Activated CD4-positive, alpha-beta T cell treated with anti-CD3 and anti-CD28 coated beads for 36 hours (primary cell): ENCODE measurements at regions of chr9 and their contacts with region 1.

Region 1: DNA sequence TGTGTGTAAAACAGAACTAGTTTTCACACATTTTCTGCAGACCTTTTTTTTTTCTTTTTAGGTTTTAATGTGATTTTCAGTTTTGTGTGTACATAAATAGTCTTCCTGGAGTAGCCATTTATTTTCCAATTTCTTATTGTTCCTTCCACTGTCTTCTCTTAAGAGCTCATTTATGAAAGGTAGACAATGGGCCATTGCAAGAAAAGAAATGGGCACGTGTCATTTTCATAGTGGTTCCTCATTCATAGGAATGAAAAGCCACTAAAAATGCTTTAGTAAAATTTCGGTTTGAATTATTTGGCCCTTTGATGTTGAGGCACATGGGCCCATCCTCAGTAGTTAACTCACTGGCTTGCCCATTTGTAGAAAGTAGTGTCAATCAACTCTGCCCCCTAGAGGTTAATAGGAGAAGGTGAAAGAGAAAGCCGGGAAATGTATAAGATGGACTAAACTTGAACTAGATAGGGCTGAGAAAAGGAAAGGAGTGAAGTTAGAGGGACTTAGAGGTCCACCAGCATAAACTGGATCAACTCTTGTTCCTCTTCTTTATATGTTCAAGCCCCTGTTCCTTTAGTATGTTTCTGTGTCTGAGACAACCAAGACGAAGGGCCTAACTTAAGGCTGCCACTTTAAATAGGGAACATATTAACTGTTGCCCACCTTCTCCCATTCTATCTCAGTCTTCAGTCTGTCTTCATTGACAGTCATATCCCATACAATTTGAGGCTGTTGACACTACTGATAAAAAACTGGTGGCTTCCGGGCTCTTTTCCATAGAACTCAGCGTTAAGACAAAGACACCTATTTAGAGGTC is 72.6 kb downstream of the SMARCA2 start:
- DNase-seq: peak; percentile 39
- ATAC-seq: peak; percentile 95
- H3K4me3 Mint-ChIP-seq: no peak overlapping the region
- H3K27ac Mint-ChIP-seq: peak overlapping the region; percentile 24
- H3K4me1 Mint-ChIP-seq: peaks cover 18% of the 10 kb centered on the region
- H3K27me3 Mint-ChIP-seq: no peaks in the 10 kb centered on the region

Region 2: GRCh38 chr9:1460143-1460769 is 627.5 kb before region 1 on chr9:
- CTCF ChIA-PET with region 1: no interaction called
- POLR2A ChIA-PET with region 1: no interaction called
- intact Hi-C with region 1: loop called (anchors 10 kb)
- DNase-seq: peak; percentile 30
- ATAC-seq: peak; percentile 42
- H3K4me3 Mint-ChIP-seq: no peak overlapping the region
- H3K27ac Mint-ChIP-seq: no peak overlapping the region
- H3K4me1 Mint-ChIP-seq: peaks cover 4% of the 10 kb centered on the region
- H3K27me3 Mint-ChIP-seq: peaks cover 10% of the 10 kb centered on the region

Region 3: GRCh38 chr9:1775230-1775629 is 312.5 kb before region 1 on chr9:
- CTCF ChIA-PET with region 1: no interaction called
- POLR2A ChIA-PET with region 1: no interaction called
- intact Hi-C with region 1: no loop called
- DNase-seq: no peak
- ATAC-seq: no peak
- H3K4me3 Mint-ChIP-seq: no peak overlapping the region
- H3K27ac Mint-ChIP-seq: no peak overlapping the region
- H3K4me1 Mint-ChIP-seq: no peaks in the 10 kb centered on the region
- H3K27me3 Mint-ChIP-seq: no peaks in the 10 kb centered on the region

Region 4: DNA sequence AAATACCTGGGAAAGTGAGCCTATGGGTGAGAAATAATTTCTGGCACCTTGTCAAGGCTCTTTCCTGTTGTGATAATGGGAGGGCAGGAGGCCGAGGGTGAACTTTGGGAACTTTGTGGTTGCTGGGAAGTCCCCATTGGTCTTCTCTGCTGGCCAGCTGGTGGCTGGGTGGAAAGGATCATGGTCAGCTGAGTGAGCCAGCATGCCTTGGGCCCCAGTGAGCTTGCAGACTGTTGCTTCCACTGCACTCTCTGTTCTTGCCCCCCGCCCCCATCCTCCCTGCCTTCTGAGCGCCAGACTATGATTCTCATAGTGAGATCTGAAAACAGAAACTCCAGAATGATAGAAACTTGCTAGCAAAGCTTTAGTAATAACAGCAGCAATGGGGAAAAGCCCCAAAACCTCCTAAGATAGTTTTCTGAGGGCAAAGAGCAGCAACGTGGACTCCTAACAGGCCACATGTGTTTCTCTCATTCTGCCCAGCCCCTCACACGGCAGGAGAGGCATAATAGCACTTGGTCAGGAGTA is 211.7 kb before region 1 on chr9:
- CTCF ChIA-PET with region 1: interaction called, 3 read pairs
- POLR2A ChIA-PET with region 1: interaction called, 4 read pairs
- intact Hi-C with region 1: loop called in 1 of 2 experiments (anchors 2 kb)
- DNase-seq: peak; percentile 90
- ATAC-seq: peak; percentile 71
- H3K4me3 Mint-ChIP-seq: no peak overlapping the region
- H3K27ac Mint-ChIP-seq: peak overlapping the region; percentile 66
- H3K4me1 Mint-ChIP-seq: peaks cover 40% of the 10 kb centered on the region
- H3K27me3 Mint-ChIP-seq: peaks cover 22% of the 10 kb centered on the region

Region 5: DNA sequence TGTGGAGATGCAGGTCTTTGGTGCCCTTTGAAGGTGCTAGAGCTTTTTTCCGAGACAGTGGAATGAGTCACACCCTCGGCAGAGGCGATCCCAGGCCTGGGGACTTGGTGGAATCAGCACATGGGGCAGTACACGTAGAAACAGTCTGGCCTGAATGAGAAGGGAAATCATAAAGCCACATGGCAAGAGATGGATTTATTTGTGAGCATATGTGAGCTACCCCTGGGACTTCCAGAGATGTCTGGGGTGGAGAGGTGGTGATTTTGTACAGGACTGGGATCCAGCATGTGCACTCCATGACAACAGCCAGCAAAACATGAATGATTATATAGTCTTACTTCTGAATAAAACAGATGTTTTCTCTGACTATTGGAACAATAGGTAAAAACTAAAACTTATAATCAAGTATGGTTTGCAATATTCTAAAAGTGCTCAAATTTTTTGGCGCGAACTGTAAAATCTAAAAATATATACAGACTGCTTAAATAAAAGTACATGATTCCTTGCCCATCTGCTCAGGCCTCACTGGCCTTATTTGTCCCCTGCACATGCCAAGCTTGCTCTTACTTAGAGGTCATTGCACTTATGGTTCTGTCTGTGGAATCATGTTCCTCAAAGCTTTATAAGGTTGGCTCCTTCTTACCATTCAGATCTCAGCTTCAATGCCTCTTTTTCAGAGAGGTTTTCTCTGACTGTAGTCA is 127.2 kb before region 1 on chr9:
- CTCF ChIA-PET with region 1: no interaction called
- POLR2A ChIA-PET with region 1: no interaction called
- intact Hi-C with region 1: no loop called
- DNase-seq: no peak
- ATAC-seq: no peak
- H3K4me3 Mint-ChIP-seq: no peak overlapping the region
- H3K27ac Mint-ChIP-seq: no peak overlapping the region
- H3K4me1 Mint-ChIP-seq: no peaks in the 10 kb centered on the region
- H3K27me3 Mint-ChIP-seq: no peaks in the 10 kb centered on the region

Region 6: GRCh38 chr9:2014696-2015580 is 72.8 kb before region 1 on chr9 and contains the start of gene SMARCA2:
- CTCF ChIA-PET with region 1: interaction called, 3 read pairs
- POLR2A ChIA-PET with region 1: no interaction called
- intact Hi-C with region 1: loop called in 1 of 2 experiments (anchors 1 kb)
- DNase-seq: peak; percentile 98
- ATAC-seq: peak; percentile 84
- H3K4me3 Mint-ChIP-seq: peak within 1 kb of the TSS; percentile 92
- H3K27ac Mint-ChIP-seq: peak within 1 kb of the TSS; percentile 99
- H3K4me1 Mint-ChIP-seq: peaks cover 45% of the 10 kb centered on the region
- H3K27me3 Mint-ChIP-seq: no peaks in the 10 kb centered on the region
- total RNA-seq, gene SMARCA2: 91.3 to 94.0 TPM

Region 7: DNA sequence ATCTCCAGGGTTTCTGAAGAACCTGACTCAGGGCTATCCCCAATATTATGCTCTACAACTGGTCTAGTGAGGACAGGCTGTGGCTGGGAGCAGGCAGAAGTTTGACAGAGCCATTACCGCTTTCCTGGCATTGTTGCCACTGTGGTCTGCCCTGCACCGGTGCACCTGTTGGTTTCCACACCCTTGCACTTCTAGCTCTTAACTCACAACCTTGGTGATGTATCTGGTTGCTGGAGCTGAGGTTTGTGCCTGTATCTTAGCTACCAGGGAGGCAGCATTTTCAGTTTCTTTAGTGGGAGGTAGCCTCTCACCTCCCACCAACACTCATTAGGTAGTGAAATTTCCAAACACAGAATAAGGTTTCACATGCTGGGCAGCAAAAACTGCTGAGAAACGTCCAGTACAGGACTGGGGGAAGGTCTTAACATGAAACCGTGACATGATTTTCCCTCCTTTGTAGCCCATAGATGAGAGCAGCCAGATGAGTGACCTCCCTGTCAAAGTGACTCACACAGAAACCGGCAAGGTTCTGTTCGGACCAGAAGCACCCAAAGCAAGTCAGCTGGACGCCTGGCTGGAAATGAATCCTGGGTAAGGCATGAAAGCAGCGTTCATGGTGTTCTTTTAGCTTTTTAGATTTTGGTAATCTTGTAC is 14.8 kb before region 1 on chr9:
- CTCF ChIA-PET with region 1: interaction called, 10 read pairs
- POLR2A ChIA-PET with region 1: no interaction called
- intact Hi-C with region 1: no loop called
- DNase-seq: peak; percentile 17
- ATAC-seq: peak; percentile 65
- H3K4me3 Mint-ChIP-seq: no peak overlapping the region
- H3K27ac Mint-ChIP-seq: no peak overlapping the region
- H3K4me1 Mint-ChIP-seq: peaks cover 18% of the 10 kb centered on the region
- H3K27me3 Mint-ChIP-seq: no peaks in the 10 kb centered on the region

Region 8: GRCh38 chr9:2199999-2200796 is 112.5 kb after region 1 on chr9:
- CTCF ChIA-PET with region 1: no interaction called
- POLR2A ChIA-PET with region 1: no interaction called
- intact Hi-C with region 1: no loop called
- DNase-seq: no peak
- ATAC-seq: no peak
- H3K4me3 Mint-ChIP-seq: no peak overlapping the region
- H3K27ac Mint-ChIP-seq: no peak overlapping the region
- H3K4me1 Mint-ChIP-seq: peaks cover 9% of the 10 kb centered on the region
- H3K27me3 Mint-ChIP-seq: no peaks in the 10 kb centered on the region